ENCODE measurements at regions of chr20 and their contacts with region 1.

Region 1: GRCh38 chr20:3854462-3854871 is 7.8 kb downstream of the MAVS start:
- DNase-seq: no peak
- H3K4me3 ChIP-seq: no peak overlapping the region
- H3K27ac ChIP-seq: no peak overlapping the region
- H3K4me1 ChIP-seq: no peaks in the 10 kb centered on the region
- H3K27me3 ChIP-seq: no peaks in the 10 kb centered on the region
- CTCF ChIP-seq: no peak

Region 2: DNA sequence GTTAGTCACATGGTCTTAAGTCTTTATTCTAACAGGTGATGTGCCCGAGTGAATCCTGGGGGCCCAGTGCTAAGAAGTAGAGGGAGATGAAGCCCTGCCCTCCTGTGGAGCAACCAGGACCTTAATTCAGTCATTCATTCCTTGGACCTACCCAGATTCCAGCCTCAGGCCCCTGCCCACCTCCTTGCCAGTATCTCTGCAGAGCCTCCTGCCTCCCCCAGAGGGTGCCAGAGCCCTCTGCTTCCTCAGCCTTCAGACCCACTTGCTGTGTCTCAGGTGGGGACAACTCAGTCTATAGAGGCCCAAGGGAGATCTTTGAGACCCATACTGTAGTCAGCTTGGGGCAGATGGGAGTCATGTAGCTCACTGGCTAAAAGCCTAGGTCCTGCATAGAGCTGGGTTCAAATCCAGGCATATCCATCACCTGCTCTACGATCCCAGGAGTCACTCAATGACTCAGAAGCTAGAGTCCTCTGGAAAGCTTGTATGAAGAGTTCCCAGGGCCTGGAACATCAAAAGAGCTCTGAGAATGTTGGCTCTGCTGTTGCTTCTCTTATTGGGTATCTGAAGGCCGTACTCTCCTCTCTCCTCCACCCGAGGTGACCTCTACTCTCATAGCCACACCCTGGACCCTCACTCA is 138.2 kb before region 1 on chr20:
- CTCF ChIA-PET with region 1: interaction called, 10 read pairs
- POLR2A ChIA-PET with region 1: no interaction called
- intact Hi-C with region 1: no loop called
- DNase-seq: peak; percentile 72
- H3K4me3 ChIP-seq: no peak overlapping the region
- H3K27ac ChIP-seq: no peak overlapping the region
- H3K4me1 ChIP-seq: no peaks in the 10 kb centered on the region
- H3K27me3 ChIP-seq: peaks cover 4% of the 10 kb centered on the region
- CTCF ChIP-seq: peak; percentile 88

Region 3: DNA sequence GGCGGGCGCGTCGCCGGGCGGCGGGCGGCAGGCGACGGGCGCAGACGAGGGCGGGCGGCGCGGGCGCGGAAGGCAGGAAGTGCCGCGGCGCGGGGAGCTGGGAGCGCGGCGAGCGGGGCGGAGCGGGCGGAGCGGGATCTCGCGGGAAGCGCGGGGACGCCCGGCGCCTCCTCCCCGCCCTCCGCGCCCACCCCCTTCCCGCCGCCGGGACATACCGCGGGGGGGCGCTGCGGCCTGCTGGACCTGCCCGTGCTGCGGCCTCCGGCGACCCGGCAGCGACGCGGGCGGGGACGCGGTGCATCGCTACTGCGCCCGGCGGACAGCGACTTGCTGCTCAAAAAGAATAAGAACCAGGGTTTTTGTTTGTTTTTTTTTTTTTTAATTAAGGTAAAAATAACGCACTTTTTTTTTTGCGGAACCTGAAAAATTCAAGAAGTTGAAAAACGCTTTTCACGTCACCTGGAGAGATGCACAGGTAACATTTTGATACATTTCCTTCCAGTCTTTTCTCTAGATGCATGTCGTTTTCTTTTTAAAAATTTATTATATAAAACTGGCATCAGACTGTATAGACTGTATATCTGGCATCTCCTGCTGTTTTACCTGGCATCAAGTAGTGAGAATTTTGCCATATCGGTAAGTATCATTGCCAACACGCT is 67.7 kb before region 1 on chr20 and contains the start of gene CENPB:
- CTCF ChIA-PET with region 1: interaction called, 21 read pairs
- POLR2A ChIA-PET with region 1: no interaction called
- intact Hi-C with region 1: loop called (anchors 5 kb)
- DNase-seq: peak; percentile 93
- H3K4me3 ChIP-seq: peak within 1 kb of the TSS; percentile 84
- H3K27ac ChIP-seq: peak within 1 kb of the TSS; percentile 87
- H3K4me1 ChIP-seq: peaks cover 19% of the 10 kb centered on the region
- H3K27me3 ChIP-seq: no peaks in the 10 kb centered on the region
- CTCF ChIP-seq: peak; percentile 68
- total RNA-seq, gene CENPB: 101 and 108 TPM in 2 replicates

Region 4: DNA sequence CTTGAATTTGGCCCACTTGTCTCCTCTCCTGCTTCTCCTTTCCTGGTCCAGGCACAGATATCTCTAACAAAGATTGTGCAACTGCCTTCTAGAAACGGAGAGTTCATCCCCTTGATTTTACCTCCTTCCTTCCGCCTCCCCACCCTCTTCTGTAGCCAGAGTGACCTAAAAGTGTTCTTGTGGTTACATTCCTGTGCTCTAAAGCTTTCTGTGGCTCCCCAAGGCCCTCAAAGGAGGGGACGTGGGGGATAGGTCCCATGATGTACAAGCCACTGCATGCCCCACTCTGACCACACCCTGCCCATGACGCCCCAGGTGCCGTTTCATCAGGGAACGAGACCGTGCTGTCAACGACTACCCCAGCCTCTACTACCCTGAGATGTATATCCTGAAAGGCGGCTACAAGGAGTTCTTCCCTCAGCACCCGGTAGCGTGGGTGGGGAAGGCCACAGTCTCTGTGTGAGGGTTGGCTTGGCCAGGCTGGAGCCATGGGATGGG is 50.2 kb before region 1 on chr20:
- CTCF ChIA-PET with region 1: no interaction called
- POLR2A ChIA-PET with region 1: no interaction called
- intact Hi-C with region 1: no loop called
- DNase-seq: no peak
- H3K4me3 ChIP-seq: no peak overlapping the region
- H3K27ac ChIP-seq: peak overlapping the region; percentile 54
- H3K4me1 ChIP-seq: peaks cover 23% of the 10 kb centered on the region
- H3K27me3 ChIP-seq: no peaks in the 10 kb centered on the region
- CTCF ChIP-seq: no peak

Region 5: DNA sequence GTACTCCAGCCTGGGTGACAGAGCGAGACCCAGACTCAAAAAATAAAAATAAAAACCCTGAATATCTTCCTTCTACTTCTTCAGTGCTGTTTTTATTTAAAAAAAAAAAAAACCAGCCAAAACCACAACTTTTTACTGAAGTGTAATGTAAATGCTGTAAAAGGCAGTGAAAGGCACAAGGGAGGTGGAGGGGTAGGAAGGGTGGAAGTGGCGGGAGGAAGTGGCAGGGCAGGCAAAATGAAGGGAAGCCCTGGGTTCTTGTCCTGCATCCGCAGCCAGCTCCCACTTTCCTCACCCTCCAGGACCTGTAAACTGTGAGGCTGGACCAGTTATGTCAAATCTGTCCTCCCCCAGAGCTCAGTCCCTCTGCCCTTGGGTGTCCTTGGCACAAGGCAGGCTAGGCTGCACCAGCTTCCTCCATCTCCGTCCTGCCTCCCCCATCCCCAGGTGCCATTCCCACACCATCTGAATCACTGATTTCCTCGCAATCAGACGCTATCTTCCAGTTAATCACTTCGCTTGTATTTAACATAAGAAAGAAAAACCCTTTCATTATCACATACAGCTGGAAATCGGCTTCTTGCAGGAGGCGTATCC is 21.0 kb after region 1 on chr20:
- CTCF ChIA-PET with region 1: interaction called, 5 read pairs
- POLR2A ChIA-PET with region 1: interaction called, 12 read pairs
- intact Hi-C with region 1: no loop called
- DNase-seq: no peak
- H3K4me3 ChIP-seq: no peak overlapping the region
- H3K27ac ChIP-seq: no peak overlapping the region
- H3K4me1 ChIP-seq: no peaks in the 10 kb centered on the region
- H3K27me3 ChIP-seq: no peaks in the 10 kb centered on the region
- CTCF ChIP-seq: no peak

Region 6: DNA sequence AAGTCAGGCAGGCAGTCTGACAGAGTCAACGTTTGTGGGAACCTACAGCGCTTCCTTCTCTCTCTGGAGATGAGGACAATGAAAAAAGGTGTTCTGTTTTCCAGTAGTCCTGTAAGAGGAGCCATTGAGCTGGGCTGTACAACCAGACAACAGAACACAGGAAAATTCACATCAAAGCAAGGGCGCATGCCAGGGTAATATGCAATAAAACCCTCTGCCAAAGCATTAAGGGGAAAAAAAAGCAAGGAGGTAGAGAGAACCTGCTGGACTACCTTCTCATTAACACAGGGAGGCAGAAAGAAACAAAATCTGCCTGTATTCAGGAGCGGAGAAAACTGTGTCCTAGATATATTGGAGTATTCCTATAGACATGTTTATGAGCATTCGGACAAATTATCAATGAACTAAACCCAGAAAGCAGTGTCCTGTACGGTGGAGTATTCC is 159.6 kb after region 1 on chr20:
- CTCF ChIA-PET with region 1: no interaction called
- POLR2A ChIA-PET with region 1: no interaction called
- intact Hi-C with region 1: no loop called
- DNase-seq: peak; percentile 73
- H3K4me3 ChIP-seq: peak overlapping the region; percentile 78
- H3K27ac ChIP-seq: peak overlapping the region; percentile 10
- H3K4me1 ChIP-seq: peaks cover 11% of the 10 kb centered on the region
- H3K27me3 ChIP-seq: no peaks in the 10 kb centered on the region
- CTCF ChIP-seq: peak; percentile 63

Measured in A673 (cell line).